GM10248 (cell line): ENCODE measurements at regions of chr11 and their contacts with region 1.

Region 1: DNA sequence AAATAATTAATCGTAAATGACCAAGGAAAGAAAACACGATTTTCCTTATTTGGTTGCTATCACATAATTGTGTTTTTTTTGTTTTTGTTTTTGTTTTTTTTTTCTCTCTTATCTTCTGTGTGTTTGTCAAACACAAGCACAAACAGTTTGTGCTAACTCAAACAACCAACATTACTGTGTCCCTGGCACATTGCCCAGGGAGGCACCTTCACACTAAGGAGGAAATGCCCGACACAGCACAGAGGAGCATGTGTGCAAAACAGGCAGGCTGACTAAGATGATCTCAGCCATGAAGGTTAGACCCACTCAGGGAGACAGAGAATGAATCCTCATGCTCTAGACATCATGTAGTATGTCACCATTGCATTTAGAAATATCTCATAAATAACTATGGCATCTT is 130.1 kb downstream of the SOX6 start:
- DNase-seq: no peak
- CTCF ChIP-seq: no peak

Region 2: GRCh38 chr11:16211407-16211806 is 14.8 kb before region 1 on chr11:
- CTCF ChIA-PET with region 1: interaction called, 11 read pairs
- POLR2A ChIA-PET with region 1: no interaction called
- DNase-seq: no peak
- CTCF ChIP-seq: no peak

Region 3: GRCh38 chr11:16242806-16243205 is 16.6 kb after region 1 on chr11:
- CTCF ChIA-PET with region 1: no interaction called
- POLR2A ChIA-PET with region 1: no interaction called
- DNase-seq: no peak
- CTCF ChIP-seq: no peak